SK-MEL-5 (cell line): ENCODE measurements at regions of chr13 and their contacts with region 1.

Region 1: GRCh38 chr13:77584106-77584505 is 48.6 kb downstream of the SCEL start:
- DNase-seq: peak; percentile 99

Region 2: DNA sequence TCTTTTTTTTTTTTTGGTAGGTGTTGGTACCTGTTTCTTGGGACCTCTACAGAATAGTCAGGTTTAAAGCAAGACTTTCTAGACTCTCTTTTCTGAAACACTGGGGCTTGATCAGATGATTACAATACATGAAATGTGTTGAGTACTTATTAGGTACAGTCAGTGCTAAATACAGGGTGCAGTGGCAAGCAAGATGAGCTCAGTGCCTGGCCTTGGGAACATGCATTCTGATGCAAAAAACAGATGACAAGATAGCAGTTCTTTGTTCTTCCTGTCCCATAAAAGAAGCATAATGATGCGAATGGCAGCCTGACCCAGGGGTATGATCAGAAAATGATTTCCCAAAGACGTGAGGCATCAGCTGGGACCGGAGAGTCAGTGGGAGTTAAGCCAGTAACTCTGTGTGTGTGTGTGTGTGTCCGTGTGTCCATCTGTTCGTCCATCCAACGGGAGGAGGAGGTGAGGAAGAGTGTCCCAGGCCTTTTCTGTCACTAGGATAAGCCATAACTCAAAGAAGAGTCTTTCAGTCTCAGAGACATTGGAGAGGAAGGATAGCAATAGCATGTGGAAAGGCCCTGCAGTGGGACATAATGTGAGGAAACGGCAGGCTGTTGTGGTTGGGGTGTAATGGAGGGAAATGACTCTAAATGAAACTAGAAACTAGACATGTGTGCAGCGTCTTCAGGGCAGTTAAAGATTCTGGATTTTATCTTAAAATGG is 145.6 kb after region 1 on chr13:
- in situ Hi-C with region 1: loop called (anchors 25 kb)
- DNase-seq: peak; percentile 26